CD14-positive monocyte (primary cell): ENCODE measurements at regions of chr16 and their contacts with region 1.

Region 1: DNA sequence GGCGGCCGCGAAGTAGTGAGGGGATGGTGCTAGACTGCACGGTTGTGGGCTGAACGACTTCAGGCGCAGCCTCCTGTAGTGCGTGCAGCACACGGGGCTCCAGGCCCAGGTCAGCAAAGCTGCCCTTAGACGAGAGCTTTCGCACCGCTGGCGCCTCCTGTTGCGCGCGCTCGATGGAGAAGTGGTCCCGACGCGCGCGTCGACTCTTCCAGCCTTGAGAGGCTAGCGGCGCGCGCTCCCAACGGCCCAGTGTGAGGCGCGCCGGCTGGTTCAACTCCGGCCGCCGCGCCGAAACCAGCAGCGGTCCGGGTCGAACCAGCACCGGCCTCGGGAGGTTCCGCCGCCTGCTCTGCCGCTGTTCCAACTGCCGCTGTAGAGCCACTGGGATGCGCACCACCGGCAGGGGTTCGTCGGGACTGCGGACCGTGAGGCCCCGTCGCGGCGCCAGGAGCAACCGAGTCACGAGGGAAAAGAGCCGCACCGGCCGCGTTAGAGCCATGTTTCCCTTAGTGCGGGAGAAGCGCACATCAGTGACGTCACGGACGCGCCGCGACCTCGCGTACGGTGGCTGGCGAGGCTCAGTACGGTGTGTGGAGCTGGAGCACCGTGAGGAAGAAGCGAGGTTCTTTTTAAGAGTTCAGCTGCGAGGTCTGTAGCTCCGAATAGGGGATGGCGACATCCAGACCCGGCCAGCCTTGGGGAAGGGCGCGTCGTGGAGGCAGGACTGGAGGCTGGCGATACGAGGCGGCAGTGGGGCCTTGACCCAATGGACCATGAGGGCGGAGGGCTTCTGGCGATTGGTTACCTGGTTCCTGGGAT is at the starts of genes DDX28 and DUS2:
- DNase-seq: peak; percentile 92 to 96 (median 95)
- H3K4me3 ChIP-seq: peak within 1 kb of the TSS; percentile 83 to 96 (median 83)
- H3K4me3 Mint-ChIP-seq: peak within 1 kb of the TSS; percentile 94 to 100
- H3K27ac ChIP-seq: peak within 1 kb of the TSS; percentile 80 to 95
- H3K27ac Mint-ChIP-seq: peak within 1 kb of the TSS; percentile 92 to 99 (median 96)
- H3K4me1 ChIP-seq: peaks cover 25 to 30% of the 10 kb centered on the region in 2 donors
- H3K4me1 Mint-ChIP-seq: peaks cover 25% of the 10 kb centered on the region
- H3K27me3 ChIP-seq: no peaks in the 10 kb centered on the region
- H3K27me3 Mint-ChIP-seq: peaks cover 0 to 2% (median 0%) of the 10 kb centered on the region in 3 donors
- CTCF ChIP-seq: no peak
- polyA plus RNA-seq, gene DDX28: 14.7 to 42.9 (median 27.7) TPM
- polyA plus RNA-seq, gene DUS2: 18.4 to 40.7 (median 33.2) TPM

Region 2: GRCh38 chr16:68005786-68006286 is 17.1 kb before region 1 on chr16:
- intact Hi-C with region 1: loop called in 1 of 2 experiments (anchors 2 kb)
- DNase-seq: peak; percentile 88 to 94 (median 92)
- H3K4me3 ChIP-seq: peak overlapping the region in 1 of 3 experiments; percentile 29
- H3K4me3 Mint-ChIP-seq: peak overlapping the region; percentile 39 to 67
- H3K27ac ChIP-seq: peak overlapping the region; percentile 93 to 97
- H3K27ac Mint-ChIP-seq: peak overlapping the region; percentile 99 to 100 (median 99)
- H3K4me1 ChIP-seq: peaks cover 53 to 57% of the 10 kb centered on the region in 2 donors
- H3K4me1 Mint-ChIP-seq: peaks cover 47% of the 10 kb centered on the region
- H3K27me3 ChIP-seq: no peaks in the 10 kb centered on the region
- H3K27me3 Mint-ChIP-seq: peaks cover 0 to 2% (median 0%) of the 10 kb centered on the region in 3 donors
- CTCF ChIP-seq: no peak

Region 3: GRCh38 chr16:68040507-68041288 is 17.8 kb after region 1 on chr16:
- intact Hi-C with region 1: loop called in 1 of 2 experiments (anchors 1 kb)
- DNase-seq: peak; percentile 69 to 79 (median 77)
- H3K4me3 ChIP-seq: peak overlapping the region in 1 of 3 experiments; percentile 62
- H3K4me3 Mint-ChIP-seq: peak overlapping the region; percentile 51 to 58
- H3K27ac ChIP-seq: peak overlapping the region; percentile 80
- H3K27ac Mint-ChIP-seq: peak overlapping the region; percentile 74 to 96 (median 90)
- H3K4me1 ChIP-seq: peaks cover 72 to 82% of the 10 kb centered on the region in 2 donors
- H3K4me1 Mint-ChIP-seq: peaks cover 74% of the 10 kb centered on the region
- H3K27me3 ChIP-seq: no peaks in the 10 kb centered on the region
- H3K27me3 Mint-ChIP-seq: peaks cover 0 to 2% (median 1%) of the 10 kb centered on the region in 3 donors
- CTCF ChIP-seq: peak; percentile 88

Region 4: GRCh38 chr16:68085259-68086071 is 62.6 kb after region 1 on chr16 and contains the start of gene NFATC3:
- intact Hi-C with region 1: no loop called
- DNase-seq: peak; percentile 95 to 98 (median 97)
- H3K4me3 ChIP-seq: peak within 1 kb of the TSS; percentile 75 to 98 (median 87)
- H3K4me3 Mint-ChIP-seq: peak within 1 kb of the TSS; percentile 90
- H3K27ac ChIP-seq: peak within 1 kb of the TSS; percentile 91 to 92
- H3K27ac Mint-ChIP-seq: peak within 1 kb of the TSS; percentile 86 to 97 (median 93)
- H3K4me1 ChIP-seq: peaks cover 45 to 69% of the 10 kb centered on the region in 2 donors
- H3K4me1 Mint-ChIP-seq: peaks cover 70% of the 10 kb centered on the region
- H3K27me3 ChIP-seq: no peaks in the 10 kb centered on the region
- H3K27me3 Mint-ChIP-seq: peaks cover 0 to 2% (median 0%) of the 10 kb centered on the region in 3 donors
- CTCF ChIP-seq: no peak
- polyA plus RNA-seq, gene NFATC3: 14.3 to 21.8 (median 15.8) TPM